ENCODE measurements at regions of chr10 and their contacts with region 1.

Region 1: GRCh38 chr10:97731346-97732051 is 5.4 kb upstream of the ZFYVE27 start:
- DNase-seq: peak; percentile 64
- H3K4me3 ChIP-seq: no peak overlapping the region
- H3K27ac ChIP-seq: no peak overlapping the region
- H3K4me1 ChIP-seq: peaks cover 13% of the 10 kb centered on the region
- H3K27me3 ChIP-seq: no peaks in the 10 kb centered on the region
- CTCF ChIP-seq: peak; percentile 87 to 93

Region 2: DNA sequence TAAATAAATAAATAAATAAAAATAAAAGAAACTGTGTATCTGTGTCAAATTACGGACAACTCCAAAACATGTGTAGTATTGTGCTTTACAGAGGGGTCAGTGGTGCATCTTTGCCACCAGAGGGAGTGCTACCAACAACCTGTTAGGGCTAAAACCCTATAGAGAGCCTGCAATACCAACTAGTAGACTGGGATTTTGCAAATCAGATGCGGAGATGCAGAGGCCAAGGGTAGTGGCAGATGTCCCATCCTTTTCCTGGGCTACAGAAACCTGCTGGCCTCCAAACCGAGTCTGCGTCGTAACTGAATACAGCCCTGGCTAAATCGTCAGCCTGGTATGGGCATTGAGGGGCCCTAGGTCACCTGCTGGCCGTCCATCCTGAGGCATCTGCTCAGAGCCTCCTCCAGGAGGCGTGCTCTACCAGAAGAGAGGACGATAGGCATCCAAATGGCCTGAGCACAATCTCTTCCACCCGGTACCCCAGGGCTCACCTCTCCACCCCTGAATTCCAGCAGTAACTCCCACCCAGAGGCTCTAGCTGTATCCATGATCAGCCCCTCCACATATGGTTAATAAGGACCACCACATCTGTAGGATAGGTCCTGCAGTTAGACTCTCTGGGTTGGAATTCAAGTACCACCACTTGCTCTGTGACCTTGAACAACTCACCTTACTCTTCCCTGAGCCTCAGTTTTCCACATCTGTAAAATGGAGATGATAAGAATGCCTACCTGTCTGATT is 324.1 kb before region 1 on chr10:
- CTCF ChIA-PET with region 1: no interaction called
- dilution Hi-C with region 1: no loop called
- in situ Hi-C with region 1: no loop called
- intact Hi-C with region 1: loop called (anchors 2 kb)
- DNase-seq: peak; percentile 78
- H3K4me3 ChIP-seq: no peak overlapping the region
- H3K27ac ChIP-seq: peak overlapping the region; percentile 9
- H3K4me1 ChIP-seq: peaks cover 33% of the 10 kb centered on the region
- H3K27me3 ChIP-seq: no peaks in the 10 kb centered on the region
- CTCF ChIP-seq: peak; percentile 64 to 71

Region 3: GRCh38 chr10:97572214-97572989 is 159.1 kb before region 1 on chr10 and contains the start of gene ANKRD2:
- CTCF ChIA-PET with region 1: no interaction called
- dilution Hi-C with region 1: no loop called
- in situ Hi-C with region 1: no loop called
- intact Hi-C with region 1: loop called (anchors 5 kb)
- DNase-seq: peak; percentile 67
- H3K4me3 ChIP-seq: peak within 1 kb of the TSS in 2 of 3 experiments; percentile 5 to 12
- H3K27ac ChIP-seq: peak within 1 kb of the TSS; percentile 80
- H3K4me1 ChIP-seq: peaks cover 53% of the 10 kb centered on the region
- H3K27me3 ChIP-seq: no peaks in the 10 kb centered on the region
- CTCF ChIP-seq: peak; percentile 94 to 97
- total RNA-seq, gene ANKRD2: 0.47 to 0.83 TPM

Region 4: DNA sequence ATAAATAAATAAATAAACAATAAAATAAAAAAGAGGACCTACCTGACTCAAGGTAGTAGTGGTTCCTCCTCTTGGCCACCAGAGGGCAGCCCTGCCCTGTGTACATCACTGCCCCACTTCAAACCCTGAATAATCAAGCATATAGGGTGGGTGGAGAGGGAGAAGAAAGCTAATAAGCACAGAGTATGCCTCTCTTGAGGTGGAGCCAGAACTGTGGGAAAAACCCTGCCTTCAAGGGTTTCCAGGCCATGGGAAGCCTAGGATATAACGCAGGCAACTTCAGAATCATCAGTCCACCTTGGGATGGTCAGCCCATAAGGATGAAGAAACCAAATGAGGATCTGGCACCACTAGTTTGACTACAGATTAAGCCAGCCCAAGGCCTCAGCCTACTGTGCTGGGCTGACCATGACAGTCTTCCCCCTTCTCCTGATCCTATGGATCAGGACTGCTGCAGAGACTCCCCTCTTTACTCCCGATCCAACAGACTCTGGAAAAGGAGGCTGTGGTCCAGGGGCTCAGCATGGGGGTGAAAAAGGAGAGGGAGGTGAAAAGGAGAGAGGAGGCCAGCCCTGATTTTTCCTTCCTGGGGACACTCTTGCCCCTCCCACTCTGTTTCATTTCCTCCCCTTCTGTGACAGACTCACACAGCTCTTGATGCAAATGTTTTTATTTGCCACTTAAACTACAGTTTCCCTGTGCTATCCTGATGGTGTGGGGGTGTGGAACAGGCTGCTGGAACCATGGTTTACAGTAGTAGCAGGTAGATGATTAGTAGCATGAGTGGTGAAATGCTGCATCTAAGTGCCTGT is 54.5 kb before region 1 on chr10:
- CTCF ChIA-PET with region 1: interaction called, 9 read pairs
- dilution Hi-C with region 1: no loop called
- in situ Hi-C with region 1: no loop called
- intact Hi-C with region 1: loop called (anchors 1 kb)
- DNase-seq: peak; percentile 52
- H3K4me3 ChIP-seq: no peak overlapping the region
- H3K27ac ChIP-seq: no peak overlapping the region
- H3K4me1 ChIP-seq: peaks cover 4% of the 10 kb centered on the region
- H3K27me3 ChIP-seq: no peaks in the 10 kb centered on the region
- CTCF ChIP-seq: peak; percentile 87 to 88

Region 5: GRCh38 chr10:97701438-97702069 is 29.9 kb before region 1 on chr10:
- CTCF ChIA-PET with region 1: interaction called, 9 read pairs
- dilution Hi-C with region 1: no loop called
- in situ Hi-C with region 1: no loop called
- intact Hi-C with region 1: loop called (anchors 1 kb)
- DNase-seq: peak; percentile 75
- H3K4me3 ChIP-seq: no peak overlapping the region
- H3K27ac ChIP-seq: no peak overlapping the region
- H3K4me1 ChIP-seq: peaks cover 14% of the 10 kb centered on the region
- H3K27me3 ChIP-seq: no peaks in the 10 kb centered on the region
- CTCF ChIP-seq: peak; percentile 93 to 95

Region 6: DNA sequence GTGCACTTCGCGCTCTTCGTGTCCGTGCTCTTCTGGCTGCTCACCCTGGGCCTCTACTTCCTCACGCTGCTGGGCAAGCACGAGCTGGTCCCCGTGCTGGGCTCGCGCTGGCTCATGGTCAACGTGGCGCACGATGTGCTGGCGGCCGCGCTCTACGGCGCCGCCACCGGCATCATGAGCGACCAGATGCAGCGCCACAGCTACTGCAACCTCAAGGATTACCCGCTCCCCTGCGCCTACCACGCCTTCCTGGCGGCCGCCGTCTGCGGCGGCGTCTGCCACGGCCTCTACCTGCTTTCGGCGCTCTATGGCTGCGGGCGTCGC is 17.5 kb before region 1 on chr10:
- CTCF ChIA-PET with region 1: interaction called, 7 read pairs
- dilution Hi-C with region 1: no loop called
- in situ Hi-C with region 1: no loop called
- intact Hi-C with region 1: loop called (anchors 1 kb)
- DNase-seq: peak; percentile 81
- H3K4me3 ChIP-seq: peak overlapping the region; percentile 46 to 80 (median 72)
- H3K27ac ChIP-seq: peak overlapping the region; percentile 80
- H3K4me1 ChIP-seq: peaks cover 44% of the 10 kb centered on the region
- H3K27me3 ChIP-seq: no peaks in the 10 kb centered on the region
- CTCF ChIP-seq: peak in 1 of 2 donors; percentile 42

Region 7: DNA sequence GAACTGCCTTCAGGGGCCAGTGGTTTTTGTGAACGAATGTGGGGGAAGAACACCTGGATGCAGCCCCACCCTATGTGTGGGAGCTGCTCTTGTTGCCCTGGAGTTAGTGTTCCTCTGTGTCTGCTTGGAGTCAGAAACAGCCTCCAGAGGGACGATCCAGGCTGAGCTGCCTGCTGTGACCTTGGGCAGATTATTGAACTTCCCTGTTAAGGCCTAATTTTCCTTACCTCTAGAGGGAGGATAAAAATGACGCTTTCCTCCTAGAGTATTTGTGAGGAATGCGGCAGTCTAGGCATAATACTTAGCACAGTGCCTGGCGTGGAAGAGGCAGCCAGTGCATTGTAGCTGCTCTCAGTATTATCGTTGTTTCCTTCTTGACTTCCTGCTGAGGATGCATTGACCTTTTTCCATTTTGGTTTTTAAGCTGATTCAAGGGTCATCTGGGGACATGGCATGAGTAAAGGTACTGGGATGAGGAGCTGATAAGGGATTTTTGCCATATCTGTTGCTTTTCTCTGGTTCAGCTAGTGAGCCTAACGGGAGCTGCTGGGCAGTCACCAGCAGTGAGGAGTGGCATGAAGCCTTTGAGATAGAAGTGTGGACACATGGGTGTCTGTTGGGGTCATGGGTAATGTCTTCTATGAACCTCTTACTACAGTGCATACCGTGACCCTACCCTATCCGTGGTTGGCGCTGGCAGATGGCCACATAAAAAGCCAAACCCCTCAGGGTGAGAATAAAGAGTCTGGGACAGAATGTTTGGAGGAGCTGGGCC is 11.9 kb after region 1 on chr10:
- CTCF ChIA-PET with region 1: no interaction called
- dilution Hi-C with region 1: no loop called
- in situ Hi-C with region 1: no loop called
- intact Hi-C with region 1: no loop called
- DNase-seq: peak; percentile 25
- H3K4me3 ChIP-seq: no peak overlapping the region
- H3K27ac ChIP-seq: no peak overlapping the region
- H3K4me1 ChIP-seq: peaks cover 13% of the 10 kb centered on the region
- H3K27me3 ChIP-seq: no peaks in the 10 kb centered on the region
- CTCF ChIP-seq: no peak

Region 8: GRCh38 chr10:97759158-97759887 is 27.8 kb after region 1 on chr10:
- CTCF ChIA-PET with region 1: no interaction called
- dilution Hi-C with region 1: no loop called
- in situ Hi-C with region 1: no loop called
- intact Hi-C with region 1: no loop called
- DNase-seq: peak; percentile 27
- H3K4me3 ChIP-seq: no peak overlapping the region
- H3K27ac ChIP-seq: no peak overlapping the region
- H3K4me1 ChIP-seq: peaks cover 3% of the 10 kb centered on the region
- H3K27me3 ChIP-seq: no peaks in the 10 kb centered on the region
- CTCF ChIP-seq: peak; percentile 88 to 91